B cell (primary cell): ENCODE measurements at regions of chr4 and their contacts with region 1.

Region 1: DNA sequence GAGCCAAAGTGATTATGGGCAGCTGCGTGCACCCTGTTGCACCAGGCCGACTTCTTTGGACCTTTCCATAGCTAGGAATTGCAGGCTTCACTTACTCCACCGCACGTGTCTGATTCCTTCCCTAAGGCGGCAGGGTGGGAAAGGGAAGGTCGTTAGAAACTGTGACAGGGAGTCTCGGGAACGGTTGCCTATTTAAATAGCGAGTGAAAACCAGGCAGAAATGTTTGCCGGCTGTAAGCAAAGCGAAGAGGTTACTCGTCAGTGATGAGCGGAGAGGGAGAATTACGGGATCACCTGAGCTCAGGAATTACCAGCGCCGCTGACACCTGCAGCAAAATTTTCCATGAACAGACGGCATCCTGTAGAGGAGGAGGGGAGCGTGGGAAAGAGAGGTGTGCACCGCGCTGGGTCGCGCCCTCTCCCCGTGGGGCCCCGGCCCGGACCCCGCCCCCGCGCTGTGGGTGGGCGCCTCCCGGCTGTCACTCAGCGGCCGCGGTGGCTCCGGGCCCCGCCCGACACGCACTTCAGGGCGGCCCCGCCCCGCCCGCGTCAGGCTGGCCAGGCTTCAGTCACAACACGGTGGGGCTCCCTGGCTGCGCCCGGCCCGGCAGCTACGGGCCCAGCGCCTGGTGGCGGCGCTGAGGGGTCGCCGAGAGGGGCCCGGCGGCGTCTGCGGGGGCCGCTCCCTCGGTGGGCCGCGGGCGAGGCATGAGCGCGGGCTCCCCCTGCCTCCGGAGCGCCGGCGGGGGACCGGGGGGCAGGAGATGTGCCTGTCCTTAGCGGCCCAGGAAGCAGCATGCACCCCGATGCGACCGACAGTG is at the start of gene SNX25:
- DNase-seq: peak; percentile 91
- ATAC-seq: peak; percentile 83
- H3K4me3 ChIP-seq: peak within 1 kb of the TSS; percentile 70 to 87 (median 74)
- H3K4me3 Mint-ChIP-seq: peak within 1 kb of the TSS; percentile 99
- H3K27ac ChIP-seq: peak within 1 kb of the TSS; percentile 62 to 73
- H3K27ac Mint-ChIP-seq: peak within 1 kb of the TSS; percentile 97
- H3K4me1 ChIP-seq: peaks cover 56 to 66% of the 10 kb centered on the region in 2 donors
- H3K4me1 Mint-ChIP-seq: peaks cover 65% of the 10 kb centered on the region
- H3K27me3 ChIP-seq: no peaks in the 10 kb centered on the region
- H3K27me3 Mint-ChIP-seq: no peaks in the 10 kb centered on the region
- CTCF ChIP-seq: no peak
- total RNA-seq, gene SNX25: 77.6 and 83.8 TPM in 2 replicates

Region 2: GRCh38 chr4:184649026-184649970 is 559.9 kb before region 1 on chr4 and contains the starts of genes CASP3 and PRIMPOL:
- CTCF ChIA-PET with region 1: no interaction called
- POLR2A ChIA-PET with region 1: no interaction called
- intact Hi-C with region 1: loop called (anchors 5 kb)
- DNase-seq: peak; percentile 97
- ATAC-seq: peak; percentile 95
- H3K4me3 ChIP-seq: peak within 1 kb of the TSS; percentile 75 to 95 (median 89)
- H3K4me3 Mint-ChIP-seq: peak within 1 kb of the TSS; percentile 94
- H3K27ac ChIP-seq: peak within 1 kb of the TSS; percentile 71 to 95
- H3K27ac Mint-ChIP-seq: peak within 1 kb of the TSS; percentile 94
- H3K4me1 ChIP-seq: peaks cover 24 to 29% of the 10 kb centered on the region in 2 donors
- H3K4me1 Mint-ChIP-seq: peaks cover 44% of the 10 kb centered on the region
- H3K27me3 ChIP-seq: no peaks in the 10 kb centered on the region
- H3K27me3 Mint-ChIP-seq: no peaks in the 10 kb centered on the region
- CTCF ChIP-seq: peak; percentile 18
- total RNA-seq, gene CASP3: 15.8 and 16.8 TPM in 2 replicates
- total RNA-seq, gene PRIMPOL: 15.4 and 21.5 TPM in 2 replicates

Region 3: GRCh38 chr4:185265942-185266341 is 56.7 kb after region 1 on chr4:
- CTCF ChIA-PET with region 1: interaction called, 3 read pairs
- POLR2A ChIA-PET with region 1: interaction called, 5 read pairs
- intact Hi-C with region 1: loop called (anchors 5 kb)
- DNase-seq: peak; percentile 34
- ATAC-seq: peak; percentile 69
- H3K4me3 ChIP-seq: no peak overlapping the region
- H3K4me3 Mint-ChIP-seq: peak overlapping the region; percentile 29
- H3K27ac ChIP-seq: no peak overlapping the region
- H3K27ac Mint-ChIP-seq: peak overlapping the region; percentile 16
- H3K4me1 ChIP-seq: peaks cover 14 to 24% of the 10 kb centered on the region in 2 donors
- H3K4me1 Mint-ChIP-seq: peaks cover 30% of the 10 kb centered on the region
- H3K27me3 ChIP-seq: no peaks in the 10 kb centered on the region
- H3K27me3 Mint-ChIP-seq: no peaks in the 10 kb centered on the region
- CTCF ChIP-seq: no peak

Region 4: DNA sequence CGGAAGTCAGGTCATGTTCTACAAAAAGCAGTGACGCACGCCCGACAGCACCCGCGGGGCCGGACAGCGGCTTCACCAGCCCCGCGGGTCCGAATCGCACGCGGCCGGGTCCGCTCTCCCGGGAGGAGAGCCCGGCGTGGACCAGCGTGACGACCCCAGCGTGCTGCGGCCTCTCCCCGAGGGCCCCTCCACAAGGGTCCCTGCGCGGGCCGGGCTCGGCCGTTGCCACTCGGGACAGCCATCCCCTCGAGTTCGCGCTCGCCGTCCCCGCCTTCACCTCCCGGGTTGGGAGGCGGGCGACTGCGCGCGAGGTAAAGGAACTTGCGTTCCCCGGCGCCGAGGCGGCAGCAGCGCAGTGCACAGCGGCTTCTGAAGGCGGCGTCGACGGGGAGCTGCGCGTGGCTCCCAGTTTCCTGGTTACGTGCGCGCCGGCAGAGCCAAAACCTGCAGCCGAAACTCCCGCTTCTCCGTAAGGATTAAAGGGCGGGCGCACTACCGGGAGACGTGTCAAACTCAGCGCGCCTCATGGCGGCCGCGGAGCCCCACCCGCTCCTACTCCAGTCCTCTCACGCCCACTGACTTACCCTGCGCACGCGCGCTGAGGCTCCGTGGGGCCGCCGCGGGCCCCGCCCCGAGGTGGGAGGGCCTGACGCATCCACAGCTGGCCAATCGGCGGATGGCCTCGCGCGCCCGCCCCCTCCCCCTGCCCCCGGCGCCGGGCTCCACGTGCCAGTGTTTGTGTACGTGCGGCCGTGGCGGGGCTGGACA is 186.9 kb after region 1 on chr4:
- CTCF ChIA-PET with region 1: no interaction called
- POLR2A ChIA-PET with region 1: no interaction called
- intact Hi-C with region 1: loop called (anchors 1 kb)
- DNase-seq: peak; percentile 97
- ATAC-seq: peak; percentile 87
- H3K4me3 ChIP-seq: peak overlapping the region; percentile 79 to 98 (median 89)
- H3K4me3 Mint-ChIP-seq: peak overlapping the region; percentile 92
- H3K27ac ChIP-seq: peak overlapping the region; percentile 97 to 99
- H3K27ac Mint-ChIP-seq: peak overlapping the region; percentile 94
- H3K4me1 ChIP-seq: peaks cover 26% of the 10 kb centered on the region in 2 donors
- H3K4me1 Mint-ChIP-seq: peaks cover 54% of the 10 kb centered on the region
- H3K27me3 ChIP-seq: no peaks in the 10 kb centered on the region
- H3K27me3 Mint-ChIP-seq: no peaks in the 10 kb centered on the region
- CTCF ChIP-seq: no peak

Region 5: DNA sequence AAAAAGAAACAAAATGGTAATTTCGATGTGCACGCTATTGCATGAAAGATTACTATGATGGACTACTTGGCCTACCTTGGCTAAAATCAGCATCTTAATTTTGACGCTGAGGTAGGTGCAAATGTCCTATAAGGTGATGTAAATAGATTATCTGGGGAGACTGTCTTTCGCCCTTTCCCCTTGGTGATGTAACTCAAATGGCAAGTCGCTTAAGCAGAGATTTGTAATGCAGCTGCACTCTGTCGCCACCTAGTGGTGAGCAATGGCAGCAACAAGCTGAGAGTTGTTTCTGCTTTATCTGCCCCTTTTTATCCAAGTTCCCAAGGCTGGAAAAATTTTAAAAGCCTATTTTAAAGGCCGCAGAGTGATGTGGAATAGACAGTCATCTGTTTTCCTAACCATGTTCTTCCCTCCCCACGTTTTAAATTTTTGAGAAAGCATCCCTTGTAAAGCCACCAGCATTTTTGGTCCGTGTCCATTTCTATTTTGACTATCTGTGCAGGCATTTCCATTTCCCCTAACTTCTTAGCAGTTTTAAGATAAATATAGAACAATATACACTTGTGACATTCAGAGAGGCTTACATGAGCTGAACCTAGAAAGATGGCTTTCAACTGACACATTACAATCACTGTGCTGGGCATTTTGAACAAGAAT is 388.4 kb after region 1 on chr4:
- CTCF ChIA-PET with region 1: no interaction called
- POLR2A ChIA-PET with region 1: no interaction called
- intact Hi-C with region 1: loop called (anchors 5 kb)
- DNase-seq: peak; percentile 79
- ATAC-seq: peak; percentile 76
- H3K4me3 ChIP-seq: no peak overlapping the region
- H3K4me3 Mint-ChIP-seq: no peak overlapping the region
- H3K27ac ChIP-seq: no peak overlapping the region
- H3K27ac Mint-ChIP-seq: no peak overlapping the region
- H3K4me1 ChIP-seq: no peaks in the 10 kb centered on the region
- H3K4me1 Mint-ChIP-seq: peaks cover 7% of the 10 kb centered on the region
- H3K27me3 ChIP-seq: peaks cover 0 to 3% (median 0%) of the 10 kb centered on the region in 4 experiments
- H3K27me3 Mint-ChIP-seq: peaks cover 33% of the 10 kb centered on the region
- CTCF ChIP-seq: peak; percentile 99